Activated naive CD4-positive, alpha-beta T cell treated with anti-CD3 and anti-CD28 coated beads for 36 hours (primary cell): ENCODE measurements at regions of chr9 and their contacts with region 1.

Region 1: DNA sequence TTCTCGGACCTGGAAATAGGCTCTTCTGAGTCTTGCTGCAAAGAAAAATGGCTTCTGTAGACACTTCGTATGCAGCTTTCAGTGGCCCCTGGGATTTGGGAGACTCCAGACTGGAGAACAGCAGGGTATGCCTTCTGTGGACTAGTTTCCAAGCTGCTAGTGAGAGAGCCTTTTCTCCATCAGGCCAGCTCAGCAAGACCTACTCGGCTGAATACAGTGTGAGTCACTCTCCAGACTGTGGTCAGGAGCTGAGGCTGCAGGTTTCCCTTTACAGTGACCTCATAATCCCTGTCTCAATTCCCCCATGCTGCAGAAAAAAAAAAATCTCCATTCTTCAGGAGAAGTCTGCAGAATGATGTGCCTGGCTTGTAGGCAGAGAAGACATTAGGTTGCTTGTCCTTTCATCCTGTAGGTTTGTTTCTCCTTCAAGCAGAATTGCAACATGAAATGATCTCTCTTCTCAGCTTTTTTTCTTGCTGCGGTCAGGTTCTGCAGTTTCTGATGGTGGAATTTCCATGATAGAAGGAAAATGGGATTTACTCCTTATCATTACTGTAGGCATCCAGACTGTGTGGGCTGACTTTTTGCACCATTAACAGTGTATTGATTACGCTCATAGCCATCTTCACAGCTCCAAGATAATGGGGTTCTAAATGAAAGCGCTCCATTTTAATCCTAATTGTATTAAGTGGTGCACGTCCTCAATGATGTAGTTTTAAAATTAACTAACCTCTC is 78.3 kb upstream of the TNFSF8 start:
- DNase-seq: peak; percentile 41
- H3K4me3 Mint-ChIP-seq: no peak overlapping the region
- H3K27ac Mint-ChIP-seq: no peak overlapping the region
- H3K4me1 Mint-ChIP-seq: peaks cover 81% of the 10 kb centered on the region
- H3K27me3 Mint-ChIP-seq: no peaks in the 10 kb centered on the region

Region 2: DNA sequence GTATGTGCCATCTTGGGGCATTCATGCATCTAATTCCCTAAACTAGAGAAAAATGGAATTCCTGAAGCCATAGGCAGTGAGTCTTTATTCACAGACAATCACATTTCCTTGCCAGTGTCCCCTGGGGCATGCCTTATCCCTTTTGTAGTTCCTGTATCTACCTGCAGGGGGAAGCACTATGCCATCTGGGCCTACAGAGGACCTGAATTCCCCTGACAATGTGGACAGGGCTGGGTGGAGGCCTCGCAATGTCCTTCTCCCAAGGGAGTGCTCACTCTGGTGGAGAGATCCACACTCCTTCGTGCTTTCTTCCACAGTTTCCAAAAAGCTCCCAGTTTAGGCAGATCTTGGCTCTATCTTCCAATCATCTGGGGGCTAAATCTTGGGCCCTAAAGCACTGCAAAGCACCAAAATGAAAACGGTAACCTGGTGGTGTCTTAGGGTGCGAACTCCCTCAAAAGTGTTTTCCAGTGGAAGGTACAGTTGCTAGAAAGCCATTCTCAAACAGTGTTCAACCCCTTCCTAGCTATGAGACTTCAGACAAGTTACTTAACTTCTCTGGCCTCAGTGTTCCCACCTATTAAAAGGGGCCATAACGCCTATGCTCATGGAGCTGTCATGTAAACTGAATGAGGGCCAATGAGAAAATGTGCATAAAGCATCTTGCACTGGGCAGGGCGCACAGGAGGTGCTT is 520.9 kb before region 1 on chr9:
- CTCF ChIA-PET with region 1: no interaction called
- intact Hi-C with region 1: loop called (anchors 5 kb)
- DNase-seq: peak; percentile 81
- H3K4me3 Mint-ChIP-seq: no peak overlapping the region
- H3K27ac Mint-ChIP-seq: no peak overlapping the region
- H3K4me1 Mint-ChIP-seq: peaks cover 19% of the 10 kb centered on the region
- H3K27me3 Mint-ChIP-seq: no peaks in the 10 kb centered on the region

Region 3: GRCh38 chr9:114738581-114739316 is 270.0 kb before region 1 on chr9:
- CTCF ChIA-PET with region 1: interaction called, 20 read pairs
- intact Hi-C with region 1: no loop called
- DNase-seq: peak; percentile 82
- H3K4me3 Mint-ChIP-seq: no peak overlapping the region
- H3K27ac Mint-ChIP-seq: peak overlapping the region; percentile 86
- H3K4me1 Mint-ChIP-seq: peaks cover 56% of the 10 kb centered on the region
- H3K27me3 Mint-ChIP-seq: no peaks in the 10 kb centered on the region

Region 4: GRCh38 chr9:114930056-114930812 is 78.5 kb before region 1 on chr9 and contains the start of gene TNFSF8:
- CTCF ChIA-PET with region 1: interaction called, 5 read pairs
- intact Hi-C with region 1: loop called (anchors 1 kb)
- DNase-seq: peak; percentile 90
- H3K4me3 Mint-ChIP-seq: peak within 1 kb of the TSS; percentile 94
- H3K27ac Mint-ChIP-seq: peak within 1 kb of the TSS; percentile 97
- H3K4me1 Mint-ChIP-seq: peaks cover 38% of the 10 kb centered on the region
- H3K27me3 Mint-ChIP-seq: no peaks in the 10 kb centered on the region
- total RNA-seq, gene TNFSF8: 25.9 to 26.4 TPM

Region 5: DNA sequence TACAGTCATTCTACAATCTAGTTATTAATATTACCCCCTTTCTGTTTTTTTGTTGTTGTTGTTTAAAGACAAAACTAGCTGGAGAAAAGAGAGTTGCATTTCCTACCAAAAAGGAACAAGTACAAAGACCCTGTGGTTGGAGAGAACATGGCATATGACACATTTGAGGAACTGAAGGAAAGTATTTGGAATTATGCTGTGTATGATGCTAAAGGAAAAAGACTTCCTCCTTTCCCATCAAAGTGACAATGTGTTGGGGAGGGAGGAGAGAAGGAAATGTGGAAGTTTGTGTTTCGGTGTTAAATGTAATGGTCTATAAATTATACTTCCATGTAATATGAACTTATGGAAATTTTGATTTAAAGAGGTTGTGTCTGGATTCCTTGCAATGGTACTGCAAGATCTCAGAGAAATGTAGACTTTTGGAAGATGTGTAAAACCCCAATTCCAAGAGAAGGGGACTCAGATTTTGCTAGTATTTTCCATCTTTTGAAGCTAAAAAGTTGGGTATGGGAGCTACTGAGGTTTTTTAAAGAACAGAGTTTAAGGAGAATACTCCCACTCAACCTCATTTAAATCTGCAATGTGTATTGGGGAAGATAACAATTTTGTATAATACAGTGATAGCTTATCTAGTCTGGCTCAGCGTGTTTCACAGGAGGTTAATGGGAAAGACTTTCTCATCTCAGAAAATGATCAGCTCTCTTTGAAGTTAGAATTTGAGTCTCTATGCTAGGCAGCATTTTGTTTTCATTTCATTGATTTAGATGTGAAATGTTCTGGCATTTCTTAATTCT is 62.9 kb before region 1 on chr9:
- CTCF ChIA-PET with region 1: no interaction called
- intact Hi-C with region 1: no loop called
- DNase-seq: no peak
- H3K4me3 Mint-ChIP-seq: no peak overlapping the region
- H3K27ac Mint-ChIP-seq: no peak overlapping the region
- H3K4me1 Mint-ChIP-seq: peaks cover 17% of the 10 kb centered on the region
- H3K27me3 Mint-ChIP-seq: no peaks in the 10 kb centered on the region

Region 6: GRCh38 chr9:114968671-114969070 is 40.0 kb before region 1 on chr9:
- CTCF ChIA-PET with region 1: interaction called, 3 read pairs
- intact Hi-C with region 1: loop called (anchors 2 kb)
- DNase-seq: peak; percentile 48
- H3K4me3 Mint-ChIP-seq: no peak overlapping the region
- H3K27ac Mint-ChIP-seq: peak overlapping the region; percentile 3
- H3K4me1 Mint-ChIP-seq: peaks cover 34% of the 10 kb centered on the region
- H3K27me3 Mint-ChIP-seq: no peaks in the 10 kb centered on the region

Region 7: DNA sequence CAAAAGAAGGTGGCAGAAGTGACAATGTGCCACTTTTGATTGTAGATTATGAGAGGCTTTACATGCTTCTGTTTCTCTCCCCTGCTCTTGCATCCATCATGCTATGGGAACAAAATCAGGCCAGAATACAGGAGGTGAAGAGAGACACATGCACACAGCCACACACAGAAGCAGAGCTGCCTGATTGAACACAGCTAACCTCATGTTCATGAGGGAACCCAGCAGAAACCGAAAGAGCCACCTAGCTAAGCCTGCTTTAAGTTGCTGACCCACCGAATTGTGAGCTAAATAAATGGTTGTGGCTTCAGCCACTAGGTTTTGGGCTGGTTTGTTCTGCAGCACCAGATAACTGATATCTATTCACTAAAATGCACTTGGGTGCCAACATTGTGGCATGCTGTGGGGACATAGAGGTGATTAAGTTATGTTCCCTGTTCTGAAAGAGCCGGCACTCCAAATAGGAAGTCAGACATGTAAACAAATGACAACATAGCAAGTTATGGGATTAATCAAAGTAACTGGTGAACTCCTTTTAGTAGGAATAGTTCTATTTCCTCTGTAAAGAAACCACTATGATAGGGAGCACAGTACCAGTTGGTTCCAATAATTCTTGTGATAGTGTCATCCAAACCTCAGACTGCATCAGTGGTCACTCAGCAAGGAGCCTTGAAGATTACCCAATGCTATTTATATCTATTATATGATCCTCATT is 202.9 kb after region 1 on chr9:
- CTCF ChIA-PET with region 1: no interaction called
- intact Hi-C with region 1: no loop called
- DNase-seq: no peak
- H3K4me3 Mint-ChIP-seq: no peak overlapping the region
- H3K27ac Mint-ChIP-seq: no peak overlapping the region
- H3K4me1 Mint-ChIP-seq: peaks cover 9% of the 10 kb centered on the region
- H3K27me3 Mint-ChIP-seq: peaks cover 37% of the 10 kb centered on the region

Region 8: GRCh38 chr9:115289757-115290208 is 281.1 kb after region 1 on chr9:
- CTCF ChIA-PET with region 1: no interaction called
- intact Hi-C with region 1: no loop called
- DNase-seq: no peak
- H3K4me3 Mint-ChIP-seq: no peak overlapping the region
- H3K27ac Mint-ChIP-seq: no peak overlapping the region
- H3K4me1 Mint-ChIP-seq: no peaks in the 10 kb centered on the region
- H3K27me3 Mint-ChIP-seq: peaks cover 11% of the 10 kb centered on the region